ENCODE measurements at regions of chr2 and their contacts with region 1.

Region 1: DNA sequence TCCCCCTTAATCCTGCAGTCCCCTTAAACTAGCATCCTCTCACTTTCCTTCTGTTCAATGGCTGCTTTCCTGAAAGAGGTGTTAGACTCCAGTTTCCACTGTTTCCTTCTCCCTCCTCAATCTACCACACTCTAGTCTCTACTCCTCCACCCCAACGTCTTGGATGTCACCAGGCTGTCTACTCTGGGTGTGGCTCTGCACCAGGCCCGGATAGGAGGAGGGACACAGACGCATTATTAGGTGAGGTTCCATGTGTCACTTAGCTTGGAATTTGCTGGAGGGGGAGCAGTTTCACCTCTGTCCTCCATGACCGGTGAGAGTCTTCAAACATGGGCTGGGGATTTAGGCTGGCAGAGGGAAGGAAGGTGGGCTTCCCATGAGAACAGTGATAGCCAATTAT is 61.3 kb downstream of the MTHFD2 start:
- DNase-seq: no peak
- ATAC-seq: no peak
- H3K4me3 ChIP-seq: no peak overlapping the region
- H3K27ac ChIP-seq: no peak overlapping the region
- H3K4me1 ChIP-seq: no peaks in the 10 kb centered on the region
- H3K27me3 ChIP-seq: no peaks in the 10 kb centered on the region
- CTCF ChIP-seq: no peak

Region 2: GRCh38 chr2:74238879-74239278 is 20.9 kb before region 1 on chr2:
- CTCF ChIA-PET with region 1: interaction called, 4 read pairs
- POLR2A ChIA-PET with region 1: no interaction called
- in situ Hi-C with region 1: no loop called
- intact Hi-C with region 1: loop called (anchors 1 kb)
- DNase-seq: no peak
- ATAC-seq: no peak
- H3K4me3 ChIP-seq: no peak overlapping the region
- H3K27ac ChIP-seq: no peak overlapping the region
- H3K4me1 ChIP-seq: no peaks in the 10 kb centered on the region
- H3K27me3 ChIP-seq: no peaks in the 10 kb centered on the region
- CTCF ChIP-seq: no peak

Measured in Panc1 (cell line).